Transverse colon (tissue), 4 donors: ENCODE measurements at regions of chr18 and their contacts with region 1.

Region 1: GRCh38 chr18:45212181-45213039 is 402.9 kb upstream of the SLC14A2 start:
- DNase-seq: peak; percentile 89
- H3K4me3 ChIP-seq: no peak overlapping the region
- H3K27ac ChIP-seq: no peak overlapping the region
- H3K4me1 ChIP-seq: no peaks in the 10 kb centered on the region
- H3K27me3 ChIP-seq: no peaks in the 10 kb centered on the region
- CTCF ChIP-seq: peak; percentile 89 to 96 (median 94)
- EP300 ChIP-seq: no peak
- POLR2A ChIP-seq: no peak

Region 2: DNA sequence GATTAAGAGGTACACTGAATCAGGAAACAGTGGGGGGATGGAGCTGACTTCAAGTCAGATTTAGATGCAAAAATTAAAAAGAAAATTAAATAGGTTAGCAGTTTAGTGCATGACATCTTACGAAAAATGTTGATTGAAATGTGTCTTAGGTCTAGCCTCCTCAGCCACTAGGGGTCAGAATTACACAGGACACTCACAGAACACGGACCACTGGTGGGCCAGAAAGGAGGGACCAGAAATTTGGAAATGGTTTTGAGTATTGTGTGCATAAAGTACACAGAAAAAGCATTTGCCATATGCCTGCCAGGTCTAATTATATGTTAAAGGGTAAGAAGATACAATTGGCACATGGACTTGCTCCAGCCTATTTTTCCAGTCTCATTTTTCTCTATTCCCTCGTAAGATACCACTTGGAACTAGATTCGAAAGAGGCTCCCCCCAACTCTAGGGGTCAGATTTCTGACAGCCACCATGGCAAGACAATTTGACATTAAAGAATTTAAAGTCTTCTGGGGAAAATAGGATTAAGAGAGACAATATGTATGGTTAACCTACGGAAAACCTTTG is 1082.0 kb before region 1 on chr18:
- in situ Hi-C with region 1: loop called in 1 of 4 experiments (anchors 25 kb)
- intact Hi-C with region 1: no loop called
- DNase-seq: peak; percentile 10
- H3K4me3 ChIP-seq: no peak overlapping the region
- H3K27ac ChIP-seq: no peak overlapping the region
- H3K4me1 ChIP-seq: peaks cover 0 to 21% (median 0%) of the 10 kb centered on the region in 4 donors
- H3K27me3 ChIP-seq: no peaks in the 10 kb centered on the region
- CTCF ChIP-seq: peak; percentile 59 to 69 (median 64)
- EP300 ChIP-seq: no peak
- POLR2A ChIP-seq: no peak

Region 3: DNA sequence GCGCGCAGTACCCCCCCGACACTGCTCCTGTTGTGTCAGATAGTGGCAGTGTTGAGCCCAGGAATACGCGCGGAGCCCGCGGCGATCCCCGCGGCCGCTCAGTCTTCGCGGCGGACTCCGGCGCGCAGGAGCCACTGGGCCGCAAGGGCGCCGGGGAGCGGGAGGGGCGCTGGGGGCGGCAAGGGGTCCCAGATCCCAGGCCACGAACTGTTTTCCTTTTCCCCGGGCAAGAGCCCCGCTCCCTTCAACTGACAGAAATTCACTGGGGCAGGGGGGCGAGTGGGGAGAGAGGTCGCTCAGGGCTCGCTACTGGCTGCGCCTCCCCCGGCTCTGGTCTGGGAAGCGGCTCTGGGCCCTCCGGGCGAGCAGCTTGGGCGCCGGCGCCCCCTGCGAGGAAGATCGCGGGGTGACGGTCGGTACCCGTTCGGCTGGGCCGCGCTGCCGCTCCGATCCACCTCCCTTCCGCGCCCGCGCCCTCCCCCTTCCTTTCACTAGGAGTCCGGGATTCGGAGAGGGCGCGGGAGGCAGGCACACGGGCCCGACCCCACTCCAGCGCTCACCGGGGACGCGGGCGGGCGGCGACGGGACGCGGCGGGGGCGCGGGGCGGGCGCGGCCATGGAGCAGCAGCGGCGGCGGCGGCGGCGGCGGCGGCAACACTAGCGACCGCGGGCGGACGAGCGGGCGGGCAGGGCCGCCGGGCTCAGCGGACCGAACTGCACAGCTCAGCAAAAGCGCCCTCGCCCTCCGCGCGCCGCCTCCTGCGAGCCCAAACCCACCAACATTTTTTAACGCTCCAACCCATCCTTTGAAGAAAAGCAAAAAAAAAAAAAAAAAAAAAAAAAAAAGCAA is 533.1 kb before region 1 on chr18:
- in situ Hi-C with region 1: loop called in 2 of 4 experiments (anchors 5 to 25 kb)
- intact Hi-C with region 1: loop called (anchors 5 kb)
- DNase-seq: peak; percentile 90
- H3K4me3 ChIP-seq: peak overlapping the region; percentile 39 to 87 (median 80)
- H3K27ac ChIP-seq: peak overlapping the region; percentile 95 to 99 (median 98)
- H3K4me1 ChIP-seq: peaks cover 0 to 9% (median 7%) of the 10 kb centered on the region in 4 donors
- H3K27me3 ChIP-seq: no peaks in the 10 kb centered on the region
- CTCF ChIP-seq: peak; percentile 61 to 83 (median 69)
- EP300 ChIP-seq: no peak
- POLR2A ChIP-seq: peak; percentile 89

Region 4: DNA sequence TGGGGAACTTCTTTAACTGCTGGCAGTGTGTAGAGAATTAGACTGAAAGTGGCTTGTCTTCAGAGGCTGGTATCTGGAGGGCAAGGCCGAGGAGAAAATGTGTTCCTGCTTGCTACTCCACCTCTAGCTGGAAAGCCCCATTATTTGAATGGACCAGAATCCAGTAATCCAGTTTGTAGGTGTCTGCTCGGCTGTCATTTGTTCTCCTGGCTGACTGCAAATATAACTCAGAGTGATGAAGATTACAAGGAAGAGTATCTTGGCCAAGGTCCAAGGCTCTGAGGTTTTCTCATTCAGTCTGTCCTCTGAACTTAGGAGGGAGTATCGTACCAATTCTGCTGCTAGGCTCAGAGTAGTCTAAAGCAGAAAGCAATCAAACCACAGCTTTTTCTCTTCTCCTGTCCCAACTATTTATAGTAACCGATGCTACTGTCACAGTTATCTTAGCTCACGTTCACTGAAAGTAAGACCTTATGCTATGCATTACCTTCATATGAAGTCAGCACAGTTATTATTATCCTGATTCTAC is 303.2 kb before region 1 on chr18:
- in situ Hi-C with region 1: loop called in 1 of 4 experiments (anchors 25 kb)
- intact Hi-C with region 1: no loop called
- DNase-seq: peak; percentile 25
- H3K4me3 ChIP-seq: no peak overlapping the region
- H3K27ac ChIP-seq: no peak overlapping the region
- H3K4me1 ChIP-seq: peaks cover 0 to 4% (median 0%) of the 10 kb centered on the region in 4 donors
- H3K27me3 ChIP-seq: no peaks in the 10 kb centered on the region
- CTCF ChIP-seq: no peak
- EP300 ChIP-seq: no peak
- POLR2A ChIP-seq: no peak